Panc1 (cell line): ENCODE measurements at regions of chr7 and their contacts with region 1.

Region 1: DNA sequence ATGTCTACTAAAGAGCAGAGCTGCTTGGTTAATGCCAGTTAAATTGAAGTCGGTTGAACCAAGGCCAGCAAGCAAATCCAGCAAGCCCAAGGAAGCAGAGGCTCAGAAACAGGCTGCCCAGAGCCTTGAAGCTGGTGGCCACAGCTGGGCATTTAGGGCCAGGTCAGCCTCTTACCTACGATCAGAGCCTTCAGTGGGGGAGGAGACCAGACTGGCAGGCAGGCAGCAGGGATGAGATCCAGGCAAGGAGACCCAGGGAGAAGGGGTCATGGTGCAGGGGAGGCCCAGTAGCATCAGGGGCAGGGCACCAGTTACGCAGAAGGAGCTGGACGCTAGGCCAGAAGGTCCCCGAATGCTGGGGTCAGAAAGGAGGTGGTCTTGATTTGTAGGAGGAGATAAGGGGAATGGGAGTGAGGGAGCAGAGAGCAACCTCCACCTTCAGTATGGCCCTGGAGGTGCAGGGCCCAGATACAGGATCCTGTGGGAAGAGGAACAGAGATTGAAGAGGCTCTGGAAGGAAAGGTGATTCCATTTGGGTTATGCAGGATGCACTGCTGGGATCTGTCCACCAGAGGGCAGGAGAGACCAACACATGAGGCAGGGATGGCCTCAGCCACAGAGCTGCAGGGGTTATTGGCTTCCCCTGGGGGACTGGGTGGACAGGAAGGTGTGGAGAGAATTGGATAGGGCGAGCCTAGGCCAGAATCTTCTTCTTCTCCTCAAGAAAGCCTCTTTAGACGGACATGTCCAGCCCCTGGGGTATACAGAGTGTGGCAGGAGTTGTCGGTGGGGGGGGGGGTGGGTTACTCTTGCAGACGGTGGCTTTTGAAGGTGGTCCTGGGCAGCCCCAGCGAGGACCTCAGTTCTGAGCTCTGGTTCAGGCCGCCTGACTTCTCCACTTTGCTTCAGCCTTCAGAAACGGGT is 132.6 kb upstream of the PODXL start:
- DNase-seq: peak; percentile 70
- ATAC-seq: peak; percentile 82
- H3K4me3 ChIP-seq: no peak overlapping the region
- H3K27ac ChIP-seq: no peak overlapping the region
- H3K4me1 ChIP-seq: no peaks in the 10 kb centered on the region; the same call in 1 of the 2 replicates
- H3K27me3 ChIP-seq: peaks cover 25% of the 10 kb centered on the region
- CTCF ChIP-seq: peak; percentile 92

Region 2: DNA sequence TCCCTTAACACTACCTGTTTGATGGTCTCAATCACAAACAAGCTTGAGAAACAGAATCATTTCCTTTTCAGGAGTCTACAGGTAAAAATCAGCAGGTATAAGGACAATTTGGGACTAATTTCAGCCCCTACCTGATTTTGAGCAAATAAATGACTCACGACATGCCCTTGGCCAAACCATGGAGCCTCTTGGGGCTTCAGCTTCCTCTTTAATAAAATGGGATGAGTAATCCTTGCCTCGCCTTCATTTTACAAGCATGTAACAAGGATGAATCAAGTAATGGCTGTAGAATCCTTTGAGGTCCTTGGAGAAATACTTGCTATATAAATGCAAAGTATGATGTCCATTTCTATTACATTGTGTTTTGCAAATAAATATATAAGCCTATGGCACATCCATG is 80.2 kb after region 1 on chr7:
- CTCF ChIA-PET with region 1: interaction called, 10 read pairs
- POLR2A ChIA-PET with region 1: no interaction called
- in situ Hi-C with region 1: no loop called
- intact Hi-C with region 1: no loop called
- DNase-seq: no peak
- ATAC-seq: no peak
- H3K4me3 ChIP-seq: no peak overlapping the region
- H3K27ac ChIP-seq: no peak overlapping the region
- H3K4me1 ChIP-seq: no peaks in the 10 kb centered on the region
- H3K27me3 ChIP-seq: no peaks in the 10 kb centered on the region; the same call in none of the 2 replicates
- CTCF ChIP-seq: no peak

Region 3: GRCh38 chr7:131819891-131820290 is 130.9 kb after region 1 on chr7:
- CTCF ChIA-PET with region 1: no interaction called
- POLR2A ChIA-PET with region 1: no interaction called
- in situ Hi-C with region 1: no loop called
- intact Hi-C with region 1: loop called (anchors 10 kb)
- DNase-seq: no peak
- ATAC-seq: no peak
- H3K4me3 ChIP-seq: no peak overlapping the region
- H3K27ac ChIP-seq: no peak overlapping the region
- H3K4me1 ChIP-seq: no peaks in the 10 kb centered on the region
- H3K27me3 ChIP-seq: peaks cover 2% of the 10 kb centered on the region
- CTCF ChIP-seq: no peak

Region 4: GRCh38 chr7:131945313-131945911 is 256.4 kb after region 1 on chr7:
- CTCF ChIA-PET with region 1: no interaction called
- POLR2A ChIA-PET with region 1: no interaction called
- in situ Hi-C with region 1: no loop called
- intact Hi-C with region 1: loop called (anchors 10 kb)
- DNase-seq: no peak
- ATAC-seq: peak; percentile 87
- H3K4me3 ChIP-seq: no peak overlapping the region; a peak in 1 of 4 replicates
- H3K27ac ChIP-seq: no peak overlapping the region
- H3K4me1 ChIP-seq: no peaks in the 10 kb centered on the region
- H3K27me3 ChIP-seq: peaks cover 16% of the 10 kb centered on the region; the same call in 1 of the 2 replicates
- CTCF ChIP-seq: peak; percentile 96

Region 5: DNA sequence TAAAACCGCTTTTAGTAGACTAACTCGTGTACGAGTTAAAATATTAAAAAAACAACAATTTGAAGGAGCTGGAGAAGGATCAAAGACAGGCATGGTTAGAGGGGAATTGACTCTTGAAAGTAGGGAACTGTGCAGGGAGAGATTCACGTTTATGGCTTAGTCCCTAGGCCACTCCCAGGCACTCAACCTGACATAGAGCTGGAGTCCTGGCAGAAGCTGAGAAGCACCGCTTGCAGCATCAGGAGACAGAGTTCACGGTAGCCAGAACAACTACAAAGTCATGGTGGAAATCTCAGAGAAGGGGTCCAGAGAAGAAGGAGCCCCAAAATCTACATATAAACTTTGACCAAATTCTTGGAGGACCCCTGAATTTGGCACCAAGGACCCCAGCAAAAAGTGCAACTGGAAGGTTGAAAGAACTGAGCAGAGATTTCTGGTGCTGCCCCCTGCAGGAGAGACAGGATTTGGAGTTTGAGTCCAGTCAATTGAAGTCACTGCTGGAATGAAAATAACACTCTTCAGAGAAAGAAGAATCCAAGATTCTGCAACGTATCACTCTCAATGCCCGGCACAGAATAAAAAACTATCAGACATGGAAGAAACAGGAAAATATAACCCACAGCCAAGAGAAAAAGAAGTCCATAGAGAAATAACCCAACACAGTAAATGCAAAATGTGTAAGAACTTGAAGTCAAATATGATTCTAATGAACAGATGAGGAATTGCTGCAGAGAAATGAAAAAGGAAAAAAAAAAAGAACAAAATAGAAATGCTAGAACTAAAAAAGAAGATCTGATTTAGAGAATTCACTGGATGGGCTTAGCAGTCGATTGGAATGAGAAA is 360.7 kb after region 1 on chr7:
- CTCF ChIA-PET with region 1: no interaction called
- POLR2A ChIA-PET with region 1: no interaction called
- in situ Hi-C with region 1: no loop called
- intact Hi-C with region 1: loop called (anchors 5 kb)
- DNase-seq: peak; percentile 46
- ATAC-seq: peak; percentile 80
- H3K4me3 ChIP-seq: peak overlapping the region in 1 of 2 experiments; percentile 35; a peak in 1 of 4 replicates
- H3K27ac ChIP-seq: no peak overlapping the region
- H3K4me1 ChIP-seq: no peaks in the 10 kb centered on the region
- H3K27me3 ChIP-seq: peaks cover 9% of the 10 kb centered on the region
- CTCF ChIP-seq: peak; percentile 85

Region 6: GRCh38 chr7:132580717-132581285 is 891.8 kb after region 1 on chr7:
- CTCF ChIA-PET with region 1: interaction called, 6 read pairs
- POLR2A ChIA-PET with region 1: no interaction called
- in situ Hi-C with region 1: no loop called
- intact Hi-C with region 1: loop called (anchors 10 kb)
- DNase-seq: peak; percentile 60
- ATAC-seq: peak; percentile 90
- H3K4me3 ChIP-seq: no peak overlapping the region
- H3K27ac ChIP-seq: no peak overlapping the region
- H3K4me1 ChIP-seq: no peaks in the 10 kb centered on the region
- H3K27me3 ChIP-seq: peaks cover 31% of the 10 kb centered on the region
- CTCF ChIP-seq: peak; percentile 85